Caco-2 (cell line): ENCODE measurements at regions of chr5 and their contacts with region 1.

Region 1: DNA sequence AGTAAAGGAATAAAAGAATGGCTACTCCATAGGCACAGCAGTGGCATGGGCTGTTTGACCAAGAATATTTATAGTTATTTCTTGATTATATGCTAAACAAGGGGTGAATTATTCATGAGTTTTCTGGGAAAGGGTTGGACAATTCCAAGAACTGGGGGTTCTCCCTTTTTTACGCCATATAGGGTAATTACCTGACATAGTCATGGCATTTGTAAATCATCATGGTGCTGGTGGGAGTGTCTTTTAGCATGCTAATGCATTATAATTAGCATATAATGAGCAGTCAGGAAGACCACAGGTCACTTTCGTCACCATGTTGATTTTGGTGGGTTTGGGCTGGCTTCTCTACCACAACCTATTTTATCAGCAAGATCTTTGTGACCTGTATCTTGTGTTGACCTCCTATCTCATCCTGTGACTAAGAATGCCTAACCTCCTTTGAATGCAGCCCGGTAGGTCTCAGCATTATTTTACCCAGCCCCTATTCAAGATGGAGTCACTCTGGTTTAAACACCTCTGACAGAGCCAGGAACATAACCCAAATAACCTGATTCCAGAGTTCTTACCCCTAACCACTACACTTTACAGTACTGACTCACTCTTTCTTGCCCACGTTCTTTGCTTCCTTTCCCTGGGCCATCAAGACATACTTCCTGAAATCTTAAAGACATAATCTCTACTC is 25.0 kb upstream of the MRPS30 start:
- DNase-seq: no peak
- H3K4me3 ChIP-seq: no peak overlapping the region
- H3K4me3 Mint-ChIP-seq: no peak overlapping the region
- H3K27ac Mint-ChIP-seq: no peak overlapping the region
- H3K4me1 ChIP-seq: peaks cover 7% of the 10 kb centered on the region; the same call in 1 of the 2 replicates
- H3K4me1 Mint-ChIP-seq: peaks cover 6% of the 10 kb centered on the region
- H3K27me3 ChIP-seq: no peaks in the 10 kb centered on the region
- H3K27me3 Mint-ChIP-seq: no peaks in the 10 kb centered on the region
- CTCF ChIP-seq: no peak

Region 2: DNA sequence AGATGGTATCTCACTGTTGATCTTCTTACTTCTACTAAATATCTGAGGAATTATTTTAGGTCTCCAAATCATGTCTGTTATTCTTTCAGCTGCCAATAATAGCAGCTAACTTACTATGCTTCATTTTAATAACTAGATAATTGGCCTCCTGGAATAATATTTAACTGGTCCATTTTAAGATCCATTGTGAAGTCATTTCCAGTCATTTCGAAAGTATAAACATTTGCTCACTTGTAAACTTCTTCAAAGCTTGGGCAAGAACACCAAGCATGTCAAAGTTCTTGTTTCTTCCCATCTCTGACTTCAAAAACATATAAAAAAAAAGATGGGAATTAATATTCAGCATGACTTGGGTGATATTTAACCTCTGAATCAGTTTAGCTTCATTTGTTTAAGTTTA is 36.4 kb before region 1 on chr5:
- CTCF ChIA-PET with region 1: no interaction called
- POLR2A ChIA-PET with region 1: no interaction called
- intact Hi-C with region 1: no loop called
- DNase-seq: no peak
- H3K4me3 ChIP-seq: no peak overlapping the region
- H3K4me3 Mint-ChIP-seq: no peak overlapping the region
- H3K27ac Mint-ChIP-seq: no peak overlapping the region
- H3K4me1 ChIP-seq: no peaks in the 10 kb centered on the region
- H3K4me1 Mint-ChIP-seq: no peaks in the 10 kb centered on the region
- H3K27me3 ChIP-seq: no peaks in the 10 kb centered on the region
- H3K27me3 Mint-ChIP-seq: no peaks in the 10 kb centered on the region
- CTCF ChIP-seq: no peak

Region 3: DNA sequence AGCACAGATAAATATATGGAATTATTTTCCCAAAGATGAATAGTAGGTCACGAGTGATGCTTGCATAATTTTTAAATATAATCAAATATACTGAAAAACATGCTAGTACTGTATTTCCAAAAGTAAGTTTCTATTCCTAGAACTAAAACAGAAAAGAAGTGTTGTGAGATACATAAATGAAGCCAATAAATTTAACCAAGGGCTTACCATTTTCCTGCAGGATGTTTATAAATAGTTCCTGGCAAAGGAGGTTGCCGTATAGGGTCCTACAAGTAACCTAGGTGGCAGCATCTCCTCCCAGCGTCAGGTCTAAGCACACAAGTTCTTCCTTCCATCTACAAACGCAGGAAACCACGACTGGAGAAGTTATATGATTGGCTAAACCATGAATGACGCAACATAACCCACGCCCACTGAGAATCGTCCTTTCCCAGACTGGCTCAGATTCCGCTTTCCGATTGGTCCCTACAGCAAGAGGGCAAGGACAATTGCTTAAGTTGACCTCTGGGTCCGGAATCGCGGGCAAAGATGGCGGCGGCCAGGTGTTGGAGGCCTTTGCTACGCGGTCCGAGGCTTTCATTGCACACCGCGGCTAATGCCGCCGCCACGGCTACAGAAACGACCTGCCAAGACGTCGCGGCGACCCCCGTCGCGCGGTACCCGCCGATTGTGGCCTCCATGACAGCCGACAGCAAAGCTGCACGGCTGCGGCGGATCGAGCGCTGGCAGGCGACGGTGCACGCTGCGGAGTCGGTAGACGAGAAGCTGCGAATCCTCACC is 24.9 kb after region 1 on chr5 and contains the start of gene MRPS30:
- CTCF ChIA-PET with region 1: no interaction called
- POLR2A ChIA-PET with region 1: no interaction called
- intact Hi-C with region 1: loop called (anchors 2 kb)
- DNase-seq: peak; percentile 94 to 97
- H3K4me3 ChIP-seq: peak within 1 kb of the TSS; percentile 76
- H3K4me3 Mint-ChIP-seq: peak within 1 kb of the TSS; percentile 98
- H3K27ac Mint-ChIP-seq: peak within 1 kb of the TSS; percentile 95
- H3K4me1 ChIP-seq: 0 out of 2 replicates have a peak, but pooled peaks cover 3% of the 10 kb centered on the region
- H3K4me1 Mint-ChIP-seq: no peaks in the 10 kb centered on the region
- H3K27me3 ChIP-seq: no peaks in the 10 kb centered on the region
- H3K27me3 Mint-ChIP-seq: no peaks in the 10 kb centered on the region
- CTCF ChIP-seq: peak; percentile 19 to 61
- total RNA-seq, gene MRPS30: 62.2 and 65.3 TPM in 2 replicates